CD14-positive monocyte (primary cell): ENCODE measurements at regions of chr10 and their contacts with region 1.

Region 1: DNA sequence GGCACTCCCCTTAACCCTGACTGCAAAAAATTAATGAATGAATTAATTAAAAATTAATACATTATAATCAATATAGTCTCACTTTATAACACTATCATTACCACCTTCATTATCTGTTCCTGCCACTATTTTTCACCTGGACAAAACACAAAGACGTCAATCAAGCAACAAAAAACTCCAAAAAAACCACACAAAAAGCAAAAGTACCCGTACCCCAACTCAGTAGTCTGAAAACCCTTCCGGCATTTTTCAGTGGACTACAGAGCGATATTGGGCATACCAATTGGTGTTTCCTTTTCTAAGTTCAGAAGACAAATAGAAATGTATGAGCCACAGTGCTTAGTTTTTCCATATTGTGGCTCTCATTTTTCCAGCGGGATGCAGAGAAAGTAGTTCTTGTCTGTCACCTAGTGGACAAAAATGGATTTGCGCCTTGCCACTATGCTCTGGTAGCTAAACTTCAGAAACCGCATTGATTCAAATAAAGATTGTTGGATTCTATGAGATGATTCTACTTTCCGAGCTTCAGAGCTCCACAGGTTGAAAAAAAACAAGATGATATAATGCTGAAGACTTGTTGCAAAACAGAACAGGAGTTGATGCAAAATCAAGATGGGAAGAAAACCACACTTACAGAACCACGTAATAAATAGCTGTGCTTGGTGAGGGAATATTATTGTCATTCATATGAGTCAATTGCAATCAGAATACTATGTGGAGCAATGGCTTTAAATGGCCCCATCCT is 50.6 kb upstream of the ITGB1 start:
- DNase-seq: peak; percentile 53 to 79 (median 72)
- H3K4me3 ChIP-seq: no peak overlapping the region
- H3K4me3 Mint-ChIP-seq: peak overlapping the region in 1 of 2 donors; percentile 10
- H3K27ac ChIP-seq: no peak overlapping the region
- H3K27ac Mint-ChIP-seq: peak overlapping the region in 1 of 7 donors; percentile 19
- H3K4me1 ChIP-seq: peaks cover 17 to 30% of the 10 kb centered on the region in 2 donors
- H3K4me1 Mint-ChIP-seq: peaks cover 29% of the 10 kb centered on the region
- H3K27me3 ChIP-seq: peaks cover 2 to 5% of the 10 kb centered on the region in 2 donors
- H3K27me3 Mint-ChIP-seq: peaks cover 0 to 19% (median 4%) of the 10 kb centered on the region in 3 donors
- CTCF ChIP-seq: peak; percentile 98

Region 2: GRCh38 chr10:32795598-32796183 is 213.0 kb before region 1 on chr10:
- intact Hi-C with region 1: loop called (anchors 2 to 5 kb)
- DNase-seq: peak; percentile 4 to 17 (median 13)
- H3K4me3 ChIP-seq: no peak overlapping the region
- H3K4me3 Mint-ChIP-seq: no peak overlapping the region
- H3K27ac ChIP-seq: no peak overlapping the region
- H3K27ac Mint-ChIP-seq: no peak overlapping the region
- H3K4me1 ChIP-seq: no peaks in the 10 kb centered on the region
- H3K4me1 Mint-ChIP-seq: no peaks in the 10 kb centered on the region
- H3K27me3 ChIP-seq: no peaks in the 10 kb centered on the region
- H3K27me3 Mint-ChIP-seq: peaks cover 0 to 3% (median 0%) of the 10 kb centered on the region in 3 donors
- CTCF ChIP-seq: peak; percentile 76

Region 3: GRCh38 chr10:32958085-32959005 is 50.3 kb before region 1 on chr10 and contains the start of gene ITGB1:
- intact Hi-C with region 1: loop called (anchors 2 to 5 kb)
- DNase-seq: peak; percentile 73 to 81 (median 77)
- H3K4me3 ChIP-seq: peak within 1 kb of the TSS; percentile 69 to 93 (median 82)
- H3K4me3 Mint-ChIP-seq: peak within 1 kb of the TSS; percentile 95 to 96
- H3K27ac ChIP-seq: peak within 1 kb of the TSS; percentile 63 to 88
- H3K27ac Mint-ChIP-seq: peak within 1 kb of the TSS; percentile 85 to 97 (median 95)
- H3K4me1 ChIP-seq: peaks cover 35 to 63% of the 10 kb centered on the region in 2 donors
- H3K4me1 Mint-ChIP-seq: peaks cover 67% of the 10 kb centered on the region
- H3K27me3 ChIP-seq: no peaks in the 10 kb centered on the region
- H3K27me3 Mint-ChIP-seq: peaks cover 0 to 3% (median 0%) of the 10 kb centered on the region in 3 donors
- CTCF ChIP-seq: no peak
- polyA plus RNA-seq, gene ITGB1: 58.2 to 157 (median 127) TPM

Region 4: GRCh38 chr10:32980558-32981468 is 27.9 kb before region 1 on chr10:
- intact Hi-C with region 1: loop called in 1 of 2 experiments (anchors 1 kb)
- DNase-seq: peak; percentile 96 to 99 (median 98)
- H3K4me3 ChIP-seq: peak overlapping the region; percentile 55 to 77 (median 60)
- H3K4me3 Mint-ChIP-seq: peak overlapping the region; percentile 83 to 98
- H3K27ac ChIP-seq: peak overlapping the region; percentile 83 to 92
- H3K27ac Mint-ChIP-seq: peak overlapping the region; percentile 93 to 98 (median 97)
- H3K4me1 ChIP-seq: peaks cover 24 to 27% of the 10 kb centered on the region in 2 donors
- H3K4me1 Mint-ChIP-seq: peaks cover 44% of the 10 kb centered on the region
- H3K27me3 ChIP-seq: no peaks in the 10 kb centered on the region
- H3K27me3 Mint-ChIP-seq: peaks cover 1 to 7% (median 3%) of the 10 kb centered on the region in 3 donors
- CTCF ChIP-seq: no peak

Region 5: GRCh38 chr10:32985781-32986350 is 22.8 kb before region 1 on chr10:
- intact Hi-C with region 1: loop called in 1 of 2 experiments (anchors 1 kb)
- DNase-seq: peak; percentile 83 to 94 (median 92)
- H3K4me3 ChIP-seq: peak overlapping the region in 1 of 3 experiments; percentile 41
- H3K4me3 Mint-ChIP-seq: peak overlapping the region in 1 of 2 donors; percentile 35
- H3K27ac ChIP-seq: peak overlapping the region; percentile 81 to 92
- H3K27ac Mint-ChIP-seq: peak overlapping the region; percentile 81 to 97 (median 93)
- H3K4me1 ChIP-seq: peaks cover 26 to 29% of the 10 kb centered on the region in 2 donors
- H3K4me1 Mint-ChIP-seq: peaks cover 40% of the 10 kb centered on the region
- H3K27me3 ChIP-seq: no peaks in the 10 kb centered on the region
- H3K27me3 Mint-ChIP-seq: peaks cover 0 to 5% (median 3%) of the 10 kb centered on the region in 3 donors
- CTCF ChIP-seq: no peak